Transverse colon (tissue), 4 donors: ENCODE measurements at regions of chr14 and their contacts with region 1.

Region 1: DNA sequence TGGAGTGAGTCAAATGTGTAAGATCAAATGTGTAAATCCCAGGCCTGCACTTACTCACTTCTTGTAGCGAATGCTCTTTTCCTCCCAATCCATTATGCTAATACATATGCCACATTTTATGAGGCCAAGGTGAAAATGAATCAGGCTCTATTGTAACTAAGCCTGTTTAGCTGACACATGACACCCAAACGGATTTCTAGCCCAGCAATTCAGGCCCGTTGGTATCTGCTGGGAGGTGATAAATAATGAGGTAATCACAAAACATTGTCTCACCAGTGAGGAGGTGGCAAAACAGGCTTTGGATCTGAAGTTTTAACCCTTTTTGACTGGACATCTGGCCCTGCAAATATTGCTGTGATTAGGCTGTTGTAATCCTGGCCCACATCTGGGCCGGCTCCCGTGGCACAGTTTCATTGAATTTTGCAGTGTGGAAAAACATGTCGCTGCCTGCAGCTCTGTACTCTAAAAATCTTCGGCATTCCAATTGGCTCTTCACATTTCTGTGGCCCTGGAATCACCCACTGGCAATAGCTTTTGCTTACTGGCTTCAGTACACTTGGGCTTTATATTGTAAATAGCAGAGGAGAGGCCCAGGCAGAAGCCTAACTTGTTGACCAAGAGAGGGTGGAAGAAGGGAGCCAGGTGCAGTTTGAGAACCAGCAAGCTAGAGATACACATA is 106.1 kb downstream of the PAX9 start:
- DNase-seq: no peak
- H3K4me3 ChIP-seq: no peak overlapping the region
- H3K27ac ChIP-seq: no peak overlapping the region
- H3K4me1 ChIP-seq: no peaks in the 10 kb centered on the region
- H3K27me3 ChIP-seq: no peaks in the 10 kb centered on the region
- CTCF ChIP-seq: no peak
- EP300 ChIP-seq: no peak
- POLR2A ChIP-seq: no peak

Region 2: DNA sequence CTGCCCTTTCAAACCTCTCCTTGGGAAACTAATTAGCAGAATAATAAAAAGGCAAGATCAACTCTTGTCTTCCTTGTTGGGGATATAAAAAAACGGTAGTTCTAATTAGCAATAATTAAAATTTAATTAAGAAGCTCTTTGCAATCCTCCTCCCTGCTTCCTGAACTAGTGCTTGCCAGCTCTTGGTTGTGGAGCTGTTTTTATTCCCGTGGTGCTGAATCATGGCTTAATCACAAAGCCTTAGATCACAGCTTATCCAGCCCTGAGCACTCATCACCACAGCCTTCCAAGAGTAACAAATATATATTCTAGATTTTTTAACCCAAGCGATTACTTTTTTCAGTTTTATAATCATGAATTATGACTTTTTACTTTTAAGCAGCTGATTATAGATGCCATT is 1297.0 kb before region 1 on chr14:
- in situ Hi-C with region 1: no loop called
- intact Hi-C with region 1: loop called (anchors 10 kb)
- DNase-seq: no peak
- H3K4me3 ChIP-seq: no peak overlapping the region
- H3K27ac ChIP-seq: no peak overlapping the region
- H3K4me1 ChIP-seq: no peaks in the 10 kb centered on the region
- H3K27me3 ChIP-seq: peaks cover 30% of the 10 kb centered on the region
- CTCF ChIP-seq: no peak
- EP300 ChIP-seq: no peak
- POLR2A ChIP-seq: no peak